ENCODE measurements at regions of chr11 and their contacts with region 1.

Region 1: GRCh38 chr11:114262681-114263512 is 33.3 kb upstream of the NNMT start:
- DNase-seq: peak; percentile 20
- H3K4me3 Mint-ChIP-seq: no peak overlapping the region
- H3K27ac Mint-ChIP-seq: no peak overlapping the region
- H3K4me1 Mint-ChIP-seq: no peaks in the 10 kb centered on the region
- H3K27me3 Mint-ChIP-seq: no peaks in the 10 kb centered on the region

Region 2: DNA sequence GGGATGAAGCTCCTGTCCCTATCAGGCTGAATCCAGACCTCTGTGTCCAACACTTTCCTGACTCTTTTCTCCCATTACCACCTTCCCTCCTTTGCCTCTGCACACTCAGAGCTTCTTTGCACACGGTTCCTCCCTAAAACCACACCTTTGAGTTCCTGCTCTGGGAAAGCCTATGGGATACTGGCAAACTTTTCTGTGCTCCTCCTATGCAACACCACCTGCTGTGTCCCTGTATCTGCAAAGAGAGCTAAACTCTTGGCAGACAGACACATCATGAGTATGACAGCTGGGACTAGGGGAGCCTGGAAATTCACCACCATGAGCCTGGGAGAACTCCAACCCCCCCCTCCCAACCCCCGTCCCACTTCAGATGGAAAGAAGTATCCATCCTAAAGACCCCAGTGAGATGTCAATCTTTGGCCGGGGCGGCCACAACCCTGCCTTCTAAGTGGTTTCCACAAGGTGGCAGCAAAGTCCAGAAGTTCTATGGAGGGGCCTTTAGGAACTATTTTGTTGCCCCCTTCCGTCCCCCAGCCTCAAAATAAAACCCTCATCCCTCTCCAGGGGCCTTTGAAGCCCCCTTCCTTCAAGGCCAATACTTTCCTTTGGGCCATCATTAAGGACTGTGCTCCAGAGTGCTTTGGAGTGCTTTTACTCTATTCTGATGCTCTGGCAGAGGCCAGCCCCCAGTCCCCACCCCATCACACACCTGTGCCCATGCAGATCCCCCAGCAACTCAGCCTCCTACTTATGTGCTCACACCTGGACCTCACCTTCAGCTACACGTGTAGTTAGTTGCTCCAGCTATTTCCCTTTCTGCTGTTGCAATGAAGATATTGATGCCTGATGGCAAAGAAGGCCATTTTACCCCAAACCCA is 268.6 kb before region 1 on chr11:
- CTCF ChIA-PET with region 1: interaction called, 228 read pairs
- POLR2A ChIA-PET with region 1: no interaction called
- intact Hi-C with region 1: loop called (anchors 1 kb)
- DNase-seq: peak; percentile 34
- H3K4me3 Mint-ChIP-seq: no peak overlapping the region
- H3K27ac Mint-ChIP-seq: no peak overlapping the region
- H3K4me1 Mint-ChIP-seq: no peaks in the 10 kb centered on the region
- H3K27me3 Mint-ChIP-seq: peaks cover 21% of the 10 kb centered on the region

Region 3: GRCh38 chr11:114036156-114036811 is 226.6 kb before region 1 on chr11:
- CTCF ChIA-PET with region 1: interaction called, 95 read pairs
- POLR2A ChIA-PET with region 1: no interaction called
- intact Hi-C with region 1: loop called (anchors 1 kb)
- DNase-seq: peak; percentile 69
- H3K4me3 Mint-ChIP-seq: no peak overlapping the region
- H3K27ac Mint-ChIP-seq: no peak overlapping the region
- H3K4me1 Mint-ChIP-seq: no peaks in the 10 kb centered on the region
- H3K27me3 Mint-ChIP-seq: peaks cover 3% of the 10 kb centered on the region

Region 4: DNA sequence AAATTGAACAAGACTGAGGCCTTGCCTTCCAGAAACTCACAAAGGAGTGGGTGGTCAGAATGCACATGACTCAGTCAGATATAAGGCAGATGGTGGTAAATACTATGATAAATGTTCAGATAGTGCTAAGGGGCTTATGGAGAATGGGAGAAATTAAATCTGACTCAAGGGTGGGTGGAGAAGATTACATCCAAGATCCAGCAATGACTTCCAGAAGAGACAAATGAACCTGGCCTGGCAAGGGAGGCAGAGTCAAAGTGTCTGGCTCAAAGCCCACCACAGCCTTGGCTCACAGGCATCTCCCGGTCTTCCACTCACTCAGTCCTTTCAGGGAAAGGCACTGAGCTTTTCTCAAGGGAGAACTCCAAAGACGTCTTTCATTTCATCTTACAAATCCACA is 209.5 kb before region 1 on chr11:
- CTCF ChIA-PET with region 1: interaction called, 11 read pairs
- POLR2A ChIA-PET with region 1: no interaction called
- intact Hi-C with region 1: loop called (anchors 5 kb)
- DNase-seq: no peak
- H3K4me3 Mint-ChIP-seq: no peak overlapping the region
- H3K27ac Mint-ChIP-seq: no peak overlapping the region
- H3K4me1 Mint-ChIP-seq: no peaks in the 10 kb centered on the region
- H3K27me3 Mint-ChIP-seq: peaks cover 8% of the 10 kb centered on the region

Region 5: GRCh38 chr11:114066046-114066648 is 196.8 kb before region 1 on chr11:
- CTCF ChIA-PET with region 1: interaction called, 19 read pairs
- POLR2A ChIA-PET with region 1: no interaction called
- intact Hi-C with region 1: no loop called
- DNase-seq: peak; percentile 42
- H3K4me3 Mint-ChIP-seq: peak overlapping the region; percentile 49
- H3K27ac Mint-ChIP-seq: peak overlapping the region; percentile 85
- H3K4me1 Mint-ChIP-seq: peaks cover 4% of the 10 kb centered on the region
- H3K27me3 Mint-ChIP-seq: peaks cover 6% of the 10 kb centered on the region

Region 6: GRCh38 chr11:114192841-114193389 is 70.0 kb before region 1 on chr11:
- CTCF ChIA-PET with region 1: interaction called, 22 read pairs
- POLR2A ChIA-PET with region 1: no interaction called
- intact Hi-C with region 1: no loop called
- DNase-seq: no peak
- H3K4me3 Mint-ChIP-seq: no peak overlapping the region
- H3K27ac Mint-ChIP-seq: no peak overlapping the region
- H3K4me1 Mint-ChIP-seq: peaks cover 9% of the 10 kb centered on the region
- H3K27me3 Mint-ChIP-seq: no peaks in the 10 kb centered on the region

Region 7: GRCh38 chr11:114273071-114273470 is 10.2 kb after region 1 on chr11:
- CTCF ChIA-PET with region 1: interaction called, 14 read pairs
- POLR2A ChIA-PET with region 1: no interaction called
- intact Hi-C with region 1: no loop called
- DNase-seq: no peak
- H3K4me3 Mint-ChIP-seq: no peak overlapping the region
- H3K27ac Mint-ChIP-seq: no peak overlapping the region
- H3K4me1 Mint-ChIP-seq: no peaks in the 10 kb centered on the region
- H3K27me3 Mint-ChIP-seq: peaks cover 39% of the 10 kb centered on the region

Region 8: GRCh38 chr11:114821621-114822412 is 558.9 kb after region 1 on chr11:
- CTCF ChIA-PET with region 1: no interaction called
- POLR2A ChIA-PET with region 1: no interaction called
- intact Hi-C with region 1: no loop called
- DNase-seq: no peak
- H3K4me3 Mint-ChIP-seq: no peak overlapping the region
- H3K27ac Mint-ChIP-seq: no peak overlapping the region
- H3K4me1 Mint-ChIP-seq: no peaks in the 10 kb centered on the region
- H3K27me3 Mint-ChIP-seq: no peaks in the 10 kb centered on the region